ENCODE measurements at regions of chr3 and their contacts with region 1.

Region 1: DNA sequence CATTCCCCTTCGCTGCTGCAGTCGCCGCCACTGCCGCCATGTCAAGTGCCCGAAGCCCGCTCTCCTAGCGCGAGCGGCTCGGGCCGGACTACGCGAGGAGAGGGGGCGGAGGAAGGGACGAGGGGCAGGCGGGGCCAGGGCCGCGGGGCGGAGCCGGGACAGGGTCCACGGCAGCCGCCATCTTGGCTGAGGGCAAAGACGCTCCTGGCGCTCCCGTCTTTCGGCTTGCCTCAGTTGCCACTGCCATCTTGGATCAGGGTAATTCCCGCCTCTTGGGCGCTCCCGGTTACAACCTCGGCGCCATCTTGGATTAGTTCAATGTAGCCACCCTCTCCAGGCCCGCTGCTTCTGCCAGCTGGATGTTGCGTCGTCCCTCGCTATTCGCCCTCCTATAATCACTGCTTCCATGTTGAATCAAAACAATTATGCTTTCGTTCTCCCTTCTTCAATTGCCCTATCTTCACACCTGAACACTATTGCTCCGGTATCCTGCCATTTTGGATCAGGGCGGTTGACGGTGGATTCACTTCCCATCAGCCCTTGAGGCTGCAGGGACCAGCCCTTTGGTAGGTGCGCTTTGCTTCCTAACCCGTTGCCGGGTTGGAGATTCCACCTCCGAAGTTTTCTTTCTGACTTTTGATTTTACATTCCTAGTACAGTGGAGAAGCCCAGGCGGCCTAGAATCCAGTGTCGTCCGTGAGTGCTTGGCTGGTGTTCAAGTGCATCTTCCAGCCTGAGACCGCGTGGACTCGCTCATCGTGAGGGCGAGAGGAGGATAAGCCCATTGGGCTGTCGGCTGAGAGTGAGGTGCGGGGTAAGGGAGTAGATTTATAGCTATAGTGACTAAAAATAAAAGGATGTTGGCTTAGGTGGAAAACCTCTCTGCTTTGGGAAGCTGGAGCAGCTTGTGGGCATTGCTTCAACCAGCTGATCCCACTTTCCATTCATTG is at the start of gene HACD2:
- DNase-seq: peak; percentile 88 to 97 (median 95)
- ATAC-seq: peak; percentile 91
- H3K4me3 ChIP-seq: peak within 1 kb of the TSS; percentile 74 to 87
- H3K4me3 Mint-ChIP-seq: no peak within 1 kb of the TSS
- H3K27ac ChIP-seq: peak within 1 kb of the TSS; percentile 62 to 92
- H3K27ac Mint-ChIP-seq: peak within 1 kb of the TSS; percentile 90
- H3K4me1 ChIP-seq: peaks cover 20% of the 10 kb centered on the region
- H3K4me1 Mint-ChIP-seq: peaks cover 20% of the 10 kb centered on the region
- H3K27me3 ChIP-seq: no peaks in the 10 kb centered on the region
- H3K27me3 Mint-ChIP-seq: no peaks in the 10 kb centered on the region
- CTCF ChIP-seq: no peak
- total RNA-seq, gene HACD2: 12.9 to 13.4 TPM

Region 2: GRCh38 chr3:121660356-121661171 is 1924.7 kb before region 1 on chr3 and contains the start of gene HCLS1:
- CTCF ChIA-PET with region 1: no interaction called
- POLR2A ChIA-PET with region 1: interaction called, 4 read pairs
- intact Hi-C with region 1: loop called in 1 of 2 experiments (anchors 10 kb)
- DNase-seq: peak; percentile 52 to 90 (median 71)
- ATAC-seq: peak; percentile 83
- H3K4me3 ChIP-seq: peak within 1 kb of the TSS; percentile 58
- H3K4me3 Mint-ChIP-seq: peak within 1 kb of the TSS; percentile 92
- H3K27ac ChIP-seq: peak within 1 kb of the TSS; percentile 86 to 95
- H3K27ac Mint-ChIP-seq: peak within 1 kb of the TSS; percentile 99
- H3K4me1 ChIP-seq: peaks cover 43% of the 10 kb centered on the region
- H3K4me1 Mint-ChIP-seq: peaks cover 54% of the 10 kb centered on the region
- H3K27me3 ChIP-seq: no peaks in the 10 kb centered on the region
- H3K27me3 Mint-ChIP-seq: no peaks in the 10 kb centered on the region
- CTCF ChIP-seq: no peak
- total RNA-seq, gene HCLS1: 162 to 179 TPM

Region 3: GRCh38 chr3:121834696-121835464 is 1750.4 kb before region 1 on chr3 and contains the starts of genes EAF2 and IQCB1:
- CTCF ChIA-PET with region 1: no interaction called
- POLR2A ChIA-PET with region 1: no interaction called
- intact Hi-C with region 1: loop called (anchors 1 to 5 kb)
- DNase-seq: peak; percentile 91 to 98 (median 95)
- ATAC-seq: peak; percentile 97
- H3K4me3 ChIP-seq: peak within 1 kb of the TSS; percentile 74 to 91
- H3K4me3 Mint-ChIP-seq: peak within 1 kb of the TSS; percentile 93
- H3K27ac ChIP-seq: peak within 1 kb of the TSS; percentile 82 to 87
- H3K27ac Mint-ChIP-seq: peak within 1 kb of the TSS; percentile 94
- H3K4me1 ChIP-seq: peaks cover 25% of the 10 kb centered on the region
- H3K4me1 Mint-ChIP-seq: peaks cover 53% of the 10 kb centered on the region
- H3K27me3 ChIP-seq: no peaks in the 10 kb centered on the region
- H3K27me3 Mint-ChIP-seq: no peaks in the 10 kb centered on the region
- CTCF ChIP-seq: no peak
- total RNA-seq, gene EAF2: 3.5 to 3.7 TPM
- total RNA-seq, gene IQCB1: 36.5 to 42.2 TPM

Region 4: DNA sequence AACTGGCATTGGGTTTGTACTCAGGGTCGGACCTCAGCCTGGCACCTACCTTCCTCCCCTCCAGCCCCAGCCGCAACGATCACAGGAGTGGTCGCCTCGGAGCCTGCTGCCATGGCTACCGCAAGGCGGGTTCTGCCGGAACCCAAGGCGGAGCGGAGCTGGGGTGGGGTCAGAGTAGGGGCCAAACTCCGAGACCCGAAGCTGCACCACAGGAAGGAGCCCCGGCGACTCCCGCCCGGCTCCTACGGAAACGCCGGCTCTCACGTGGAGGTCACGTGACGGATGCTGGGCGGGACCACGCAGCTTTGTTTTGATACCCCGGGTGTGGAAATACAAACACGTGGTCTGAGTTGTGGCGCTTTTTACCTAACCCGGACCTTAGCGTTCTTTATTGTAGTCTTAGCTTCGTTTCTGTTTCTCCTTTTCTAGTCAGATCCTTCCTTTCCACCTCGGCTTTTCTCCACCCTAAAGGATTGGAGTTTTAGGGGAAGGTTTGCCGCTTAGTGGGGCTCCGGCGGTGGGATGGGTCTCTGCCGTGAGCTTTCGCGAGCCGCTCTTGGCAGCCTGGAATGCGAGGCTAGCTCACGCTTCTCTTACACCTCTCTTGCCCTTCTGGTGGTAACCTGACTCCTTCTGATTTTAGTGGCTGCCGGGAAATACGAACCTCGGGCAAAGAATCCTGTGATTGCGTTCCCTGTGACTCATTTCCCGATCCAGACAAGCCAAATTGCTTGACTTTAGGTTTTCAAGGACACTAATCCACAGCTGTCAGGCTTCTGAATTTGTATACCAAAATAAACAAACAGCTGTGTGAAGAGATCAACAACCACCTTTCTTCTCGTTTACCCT is 791.5 kb before region 1 on chr3 and contains the start of gene HSPBAP1:
- CTCF ChIA-PET with region 1: no interaction called
- POLR2A ChIA-PET with region 1: no interaction called
- intact Hi-C with region 1: loop called (anchors 5 kb)
- DNase-seq: peak; percentile 72 to 95 (median 90)
- ATAC-seq: peak; percentile 67
- H3K4me3 ChIP-seq: peak within 1 kb of the TSS; percentile 78 to 81
- H3K4me3 Mint-ChIP-seq: peak within 1 kb of the TSS; percentile 91
- H3K27ac ChIP-seq: peak within 1 kb of the TSS; percentile 77 to 91
- H3K27ac Mint-ChIP-seq: no peak within 1 kb of the TSS
- H3K4me1 ChIP-seq: peaks cover 28% of the 10 kb centered on the region
- H3K4me1 Mint-ChIP-seq: peaks cover 38% of the 10 kb centered on the region
- H3K27me3 ChIP-seq: no peaks in the 10 kb centered on the region
- H3K27me3 Mint-ChIP-seq: no peaks in the 10 kb centered on the region
- CTCF ChIP-seq: no peak
- total RNA-seq, gene HSPBAP1: 8.7 to 9.3 TPM

Region 5: DNA sequence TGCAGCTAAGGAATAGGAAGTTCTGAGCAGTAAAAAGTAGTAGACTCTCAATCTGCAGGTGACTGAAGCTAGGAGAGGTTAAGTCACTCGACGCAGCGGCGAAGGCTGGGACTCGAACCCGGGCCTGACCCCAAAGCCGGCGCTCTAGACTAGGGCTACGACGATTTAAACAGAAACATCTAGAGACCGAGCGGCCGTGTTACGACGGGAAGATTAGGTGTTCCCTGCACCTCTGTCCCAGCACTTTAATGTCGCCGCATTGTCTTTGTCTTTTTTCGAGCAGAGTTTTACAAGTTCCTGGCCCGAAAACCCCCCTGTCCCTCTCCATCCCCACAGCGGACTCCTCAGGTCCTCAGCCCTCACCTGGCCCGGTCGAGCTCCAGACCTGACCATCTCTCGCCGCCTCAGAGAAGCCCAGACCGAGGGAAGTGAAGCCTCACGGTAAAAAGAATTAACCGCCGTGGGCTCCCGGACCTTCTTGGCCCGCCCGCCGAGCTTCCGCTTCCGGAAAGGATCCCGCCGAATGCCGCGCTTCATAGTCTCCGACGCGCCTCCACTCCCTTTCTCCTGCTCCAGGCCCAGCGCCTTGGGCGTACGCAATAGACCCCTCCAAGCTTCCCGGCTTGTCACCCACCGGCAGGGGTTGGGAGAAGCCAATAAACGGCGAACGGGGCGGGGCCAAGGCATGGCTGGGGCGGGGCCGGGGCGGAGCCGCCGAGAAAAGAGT is 375.7 kb after region 1 on chr3 and contains the start of gene CCDC14:
- CTCF ChIA-PET with region 1: no interaction called
- POLR2A ChIA-PET with region 1: no interaction called
- intact Hi-C with region 1: loop called in 1 of 2 experiments (anchors 10 kb)
- DNase-seq: peak; percentile 37 to 84 (median 73)
- ATAC-seq: peak; percentile 88
- H3K4me3 ChIP-seq: peak within 1 kb of the TSS; percentile 63
- H3K4me3 Mint-ChIP-seq: peak within 1 kb of the TSS; percentile 96
- H3K27ac ChIP-seq: peak within 1 kb of the TSS; percentile 52 to 59
- H3K27ac Mint-ChIP-seq: peak within 1 kb of the TSS; percentile 93
- H3K4me1 ChIP-seq: peaks cover 16% of the 10 kb centered on the region
- H3K4me1 Mint-ChIP-seq: peaks cover 30% of the 10 kb centered on the region
- H3K27me3 ChIP-seq: no peaks in the 10 kb centered on the region
- H3K27me3 Mint-ChIP-seq: peaks cover 5% of the 10 kb centered on the region
- CTCF ChIP-seq: no peak
- total RNA-seq, gene CCDC14: 21.9 to 23.8 TPM

Region 6: DNA sequence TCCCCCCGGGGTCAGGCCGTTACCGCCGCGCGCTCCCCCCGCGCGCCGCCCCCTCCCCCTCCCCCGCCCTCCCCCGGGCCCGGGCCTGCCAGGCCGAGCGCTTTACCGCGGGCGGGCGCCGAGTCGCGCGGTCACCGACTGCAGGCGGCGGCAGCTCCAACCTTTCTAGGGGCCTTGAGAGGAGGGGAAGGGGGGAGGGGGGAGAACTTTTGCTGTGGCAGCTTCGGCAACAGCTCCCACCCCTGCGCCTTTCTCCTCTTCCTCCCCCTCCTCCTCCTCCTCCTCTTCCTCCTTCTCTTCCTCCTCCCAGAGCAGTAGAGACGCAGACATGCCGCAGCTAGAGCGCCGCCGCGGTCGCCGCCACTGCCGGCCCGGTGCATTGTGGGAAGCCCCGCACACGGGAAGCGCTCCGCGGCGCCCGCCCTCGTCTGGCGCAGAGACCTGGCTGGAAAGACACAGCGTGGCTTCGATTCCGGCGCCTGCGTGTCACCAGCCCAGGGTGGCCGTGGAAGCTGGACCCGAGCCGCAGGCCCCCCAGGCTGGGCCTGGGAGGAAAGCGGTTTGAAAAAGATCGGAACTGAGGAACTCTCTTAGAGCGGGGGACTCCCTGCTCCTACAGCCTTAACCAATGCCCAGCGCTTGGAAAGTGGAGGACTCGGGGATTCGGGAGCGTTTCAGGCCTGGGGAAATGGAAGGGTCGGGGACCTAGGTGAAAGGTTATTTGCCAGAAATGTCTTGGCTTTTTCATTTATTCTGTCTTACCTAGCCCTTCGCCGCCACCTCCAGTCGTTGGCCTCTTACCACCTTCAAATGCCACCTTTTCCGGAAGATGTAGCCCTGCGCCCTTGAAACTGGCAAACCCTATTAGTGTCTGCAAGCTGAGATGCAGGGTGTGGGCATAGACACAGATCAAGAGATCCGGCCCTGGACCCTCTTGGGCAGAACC is 1790.0 kb after region 1 on chr3 and contains the start of gene ZNF148:
- CTCF ChIA-PET with region 1: no interaction called
- POLR2A ChIA-PET with region 1: no interaction called
- intact Hi-C with region 1: loop called in 1 of 2 experiments (anchors 5 kb)
- DNase-seq: peak; percentile 85 to 95 (median 91)
- ATAC-seq: peak; percentile 91
- H3K4me3 ChIP-seq: peak within 1 kb of the TSS; percentile 71 to 89
- H3K4me3 Mint-ChIP-seq: peak within 1 kb of the TSS; percentile 94
- H3K27ac ChIP-seq: peak within 1 kb of the TSS; percentile 94 to 95
- H3K27ac Mint-ChIP-seq: peak within 1 kb of the TSS; percentile 98
- H3K4me1 ChIP-seq: peaks cover 29% of the 10 kb centered on the region
- H3K4me1 Mint-ChIP-seq: peaks cover 41% of the 10 kb centered on the region
- H3K27me3 ChIP-seq: no peaks in the 10 kb centered on the region
- H3K27me3 Mint-ChIP-seq: no peaks in the 10 kb centered on the region
- CTCF ChIP-seq: no peak
- total RNA-seq, gene ZNF148: 32.2 to 35.9 TPM